ENCODE measurements at regions of chr1 and their contacts with region 1.

Region 1: GRCh38 chr1:203625628-203626019 is 1.0 kb upstream of the ATP2B4 start:
- DNase-seq: peak; percentile 33 to 88 (median 67)
- ATAC-seq: peak; percentile 61 to 72 (median 62)
- H3K4me3 ChIP-seq: peak overlapping the region; percentile 12 to 67
- H3K4me3 Mint-ChIP-seq: peak overlapping the region; percentile 91 to 99 (median 92)
- H3K27ac ChIP-seq: peak overlapping the region; percentile 87
- H3K27ac Mint-ChIP-seq: peak overlapping the region; percentile 40 to 91
- H3K4me1 ChIP-seq: peaks cover 22 to 39% of the 10 kb centered on the region in 2 experiments
- H3K4me1 Mint-ChIP-seq: peaks cover 31 to 50% (median 39%) of the 10 kb centered on the region in 3 donors
- H3K27me3 ChIP-seq: no peaks in the 10 kb centered on the region
- H3K27me3 Mint-ChIP-seq: no peaks in the 10 kb centered on the region

Region 2: DNA sequence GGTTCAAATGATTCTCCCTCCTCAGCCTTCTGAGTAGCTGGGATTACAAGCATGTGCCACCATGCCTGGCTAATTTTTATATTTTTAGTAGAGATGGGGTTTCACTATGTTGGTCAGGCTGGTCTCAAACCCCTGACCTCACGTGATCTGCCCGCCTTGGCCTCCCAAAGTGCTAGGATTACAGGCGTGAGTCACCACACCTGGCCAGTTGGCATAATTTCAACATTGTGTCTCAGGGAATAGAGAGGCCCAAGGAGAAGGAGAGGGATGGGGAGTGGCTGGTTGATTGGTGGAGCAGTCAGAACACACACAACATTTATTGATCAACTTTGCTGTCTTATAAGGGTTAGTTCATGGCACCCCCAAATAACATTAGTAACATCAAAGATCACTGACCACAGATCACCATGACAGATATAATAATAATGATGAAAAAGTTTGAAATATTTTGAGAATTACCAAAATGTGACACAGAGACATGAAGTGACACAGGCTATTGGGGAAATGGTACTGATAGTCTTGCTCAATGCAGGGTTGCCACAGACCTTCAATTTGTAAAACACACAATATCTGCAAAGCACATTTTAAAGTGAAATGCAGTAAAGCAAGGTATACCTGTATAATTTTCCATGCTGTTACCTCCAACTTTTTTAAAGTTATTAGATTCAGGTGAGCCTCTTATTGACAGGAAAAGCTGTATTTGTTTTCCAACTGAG is 642.8 kb before region 1 on chr1:
- CTCF ChIA-PET with region 1: no interaction called
- POLR2A ChIA-PET with region 1: no interaction called
- DNase-seq: no peak
- ATAC-seq: no peak
- H3K4me3 ChIP-seq: no peak overlapping the region
- H3K4me3 Mint-ChIP-seq: no peak overlapping the region
- H3K27ac ChIP-seq: no peak overlapping the region
- H3K27ac Mint-ChIP-seq: no peak overlapping the region
- H3K4me1 ChIP-seq: no peaks in the 10 kb centered on the region
- H3K4me1 Mint-ChIP-seq: no peaks in the 10 kb centered on the region
- H3K27me3 ChIP-seq: peaks cover 0 to 10% of the 10 kb centered on the region in 2 experiments
- H3K27me3 Mint-ChIP-seq: peaks cover 16% of the 10 kb centered on the region in 2 donors

Region 3: GRCh38 chr1:203304919-203305808 is 320.5 kb before region 1 on chr1 and contains the start of gene BTG2:
- CTCF ChIA-PET with region 1: no interaction called
- POLR2A ChIA-PET with region 1: interaction called in 1 of 2 experiments, 13 read pairs
- DNase-seq: peak; percentile 76 to 96 (median 91)
- ATAC-seq: peak; percentile 81 to 83 (median 82)
- H3K4me3 ChIP-seq: peak within 1 kb of the TSS; percentile 100
- H3K4me3 Mint-ChIP-seq: peak within 1 kb of the TSS; percentile 94 to 100 (median 98)
- H3K27ac ChIP-seq: peak within 1 kb of the TSS; percentile 99
- H3K27ac Mint-ChIP-seq: peak within 1 kb of the TSS; percentile 94 to 97
- H3K4me1 ChIP-seq: peaks cover 24 to 55% of the 10 kb centered on the region in 2 experiments
- H3K4me1 Mint-ChIP-seq: peaks cover 56 to 70% (median 67%) of the 10 kb centered on the region in 3 donors
- H3K27me3 ChIP-seq: no peaks in the 10 kb centered on the region
- H3K27me3 Mint-ChIP-seq: no peaks in the 10 kb centered on the region
- total RNA-seq, gene BTG2: 172 to 655 (median 186) TPM

Region 4: GRCh38 chr1:203607533-203607873 is 18.1 kb before region 1 on chr1:
- CTCF ChIA-PET with region 1: interaction called, 6 to 10 read pairs
- POLR2A ChIA-PET with region 1: no interaction called
- DNase-seq: no peak
- ATAC-seq: no peak
- H3K4me3 ChIP-seq: no peak overlapping the region
- H3K4me3 Mint-ChIP-seq: peak overlapping the region in 1 of 3 donors; percentile 55
- H3K27ac ChIP-seq: peak overlapping the region; percentile 79
- H3K27ac Mint-ChIP-seq: peak overlapping the region; percentile 57 to 100
- H3K4me1 ChIP-seq: peaks cover 0 to 48% of the 10 kb centered on the region in 2 experiments
- H3K4me1 Mint-ChIP-seq: peaks cover 44 to 67% (median 62%) of the 10 kb centered on the region in 3 donors
- H3K27me3 ChIP-seq: no peaks in the 10 kb centered on the region
- H3K27me3 Mint-ChIP-seq: no peaks in the 10 kb centered on the region

Region 5: DNA sequence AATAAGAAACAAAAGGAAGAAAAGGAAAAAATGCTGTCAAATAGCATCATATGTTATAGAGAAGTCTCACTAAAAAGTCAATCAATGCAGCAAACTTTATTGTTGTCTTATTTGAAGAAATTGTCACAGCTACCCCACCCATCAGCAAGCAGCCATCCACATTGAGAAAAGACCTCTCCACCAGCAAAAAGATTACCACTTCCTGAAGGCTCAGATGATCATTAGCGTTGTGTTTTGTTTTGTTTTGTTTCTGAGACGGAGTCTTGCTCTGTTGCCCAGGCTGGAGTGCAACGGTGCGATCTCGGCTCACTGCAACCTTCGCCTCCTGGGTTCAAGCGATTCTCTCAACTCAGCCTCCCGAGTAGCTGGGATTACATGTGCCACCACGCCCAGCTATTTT is 30.0 kb after region 1 on chr1:
- CTCF ChIA-PET with region 1: interaction called in 1 of 2 experiments, 53 read pairs
- POLR2A ChIA-PET with region 1: interaction called, 3 to 24 read pairs
- DNase-seq: peak in 5 of 35 experiments; percentile 14 to 50 (median 16)
- ATAC-seq: peak in 2 of 4 experiments; percentile 19 to 33
- H3K4me3 ChIP-seq: no peak overlapping the region
- H3K4me3 Mint-ChIP-seq: peak overlapping the region; percentile 5 to 47 (median 18)
- H3K27ac ChIP-seq: peak overlapping the region; percentile 89
- H3K27ac Mint-ChIP-seq: peak overlapping the region; percentile 68 to 75
- H3K4me1 ChIP-seq: peaks cover 34 to 55% of the 10 kb centered on the region in 2 experiments
- H3K4me1 Mint-ChIP-seq: peaks cover 64 to 74% (median 69%) of the 10 kb centered on the region in 3 donors
- H3K27me3 ChIP-seq: no peaks in the 10 kb centered on the region
- H3K27me3 Mint-ChIP-seq: no peaks in the 10 kb centered on the region

Region 6: GRCh38 chr1:203682473-203683383 is 57.1 kb after region 1 on chr1:
- CTCF ChIA-PET with region 1: interaction called in 1 of 2 experiments, 26 read pairs
- POLR2A ChIA-PET with region 1: interaction called, 9 to 26 read pairs
- DNase-seq: peak; percentile 23 to 91 (median 71)
- ATAC-seq: peak; percentile 86 to 97 (median 93)
- H3K4me3 ChIP-seq: no peak overlapping the region
- H3K4me3 Mint-ChIP-seq: peak overlapping the region; percentile 15 to 41 (median 29)
- H3K27ac ChIP-seq: peak overlapping the region; percentile 90
- H3K27ac Mint-ChIP-seq: peak overlapping the region; percentile 85 to 87
- H3K4me1 ChIP-seq: peaks cover 20 to 40% of the 10 kb centered on the region in 2 experiments
- H3K4me1 Mint-ChIP-seq: peaks cover 31 to 74% (median 60%) of the 10 kb centered on the region in 3 donors
- H3K27me3 ChIP-seq: no peaks in the 10 kb centered on the region
- H3K27me3 Mint-ChIP-seq: no peaks in the 10 kb centered on the region

Region 7: GRCh38 chr1:203702130-203702577 is 76.5 kb after region 1 on chr1:
- CTCF ChIA-PET with region 1: interaction called, 13 to 79 read pairs
- POLR2A ChIA-PET with region 1: interaction called in 1 of 2 experiments, 7 read pairs
- DNase-seq: peak in 34 of 35 experiments; percentile 24 to 85 (median 54)
- ATAC-seq: peak; percentile 60 to 75 (median 71)
- H3K4me3 ChIP-seq: no peak overlapping the region
- H3K4me3 Mint-ChIP-seq: no peak overlapping the region
- H3K27ac ChIP-seq: no peak overlapping the region
- H3K27ac Mint-ChIP-seq: peak overlapping the region; percentile 73 to 82
- H3K4me1 ChIP-seq: no peaks in the 10 kb centered on the region
- H3K4me1 Mint-ChIP-seq: peaks cover 10 to 15% (median 11%) of the 10 kb centered on the region in 3 donors
- H3K27me3 ChIP-seq: no peaks in the 10 kb centered on the region
- H3K27me3 Mint-ChIP-seq: no peaks in the 10 kb centered on the region

Region 8: GRCh38 chr1:203733009-203733863 is 107.6 kb after region 1 on chr1:
- CTCF ChIA-PET with region 1: no interaction called
- POLR2A ChIA-PET with region 1: no interaction called
- DNase-seq: no peak
- ATAC-seq: no peak
- H3K4me3 ChIP-seq: no peak overlapping the region
- H3K4me3 Mint-ChIP-seq: no peak overlapping the region
- H3K27ac ChIP-seq: no peak overlapping the region
- H3K27ac Mint-ChIP-seq: peak overlapping the region; percentile 49 to 50
- H3K4me1 ChIP-seq: no peaks in the 10 kb centered on the region
- H3K4me1 Mint-ChIP-seq: peaks cover 0 to 2% (median 0%) of the 10 kb centered on the region in 3 donors
- H3K27me3 ChIP-seq: no peaks in the 10 kb centered on the region
- H3K27me3 Mint-ChIP-seq: no peaks in the 10 kb centered on the region

Measured in T-cell (primary cell).